ENCODE measurements at regions of chr18 and their contacts with region 1.

Region 1: DNA sequence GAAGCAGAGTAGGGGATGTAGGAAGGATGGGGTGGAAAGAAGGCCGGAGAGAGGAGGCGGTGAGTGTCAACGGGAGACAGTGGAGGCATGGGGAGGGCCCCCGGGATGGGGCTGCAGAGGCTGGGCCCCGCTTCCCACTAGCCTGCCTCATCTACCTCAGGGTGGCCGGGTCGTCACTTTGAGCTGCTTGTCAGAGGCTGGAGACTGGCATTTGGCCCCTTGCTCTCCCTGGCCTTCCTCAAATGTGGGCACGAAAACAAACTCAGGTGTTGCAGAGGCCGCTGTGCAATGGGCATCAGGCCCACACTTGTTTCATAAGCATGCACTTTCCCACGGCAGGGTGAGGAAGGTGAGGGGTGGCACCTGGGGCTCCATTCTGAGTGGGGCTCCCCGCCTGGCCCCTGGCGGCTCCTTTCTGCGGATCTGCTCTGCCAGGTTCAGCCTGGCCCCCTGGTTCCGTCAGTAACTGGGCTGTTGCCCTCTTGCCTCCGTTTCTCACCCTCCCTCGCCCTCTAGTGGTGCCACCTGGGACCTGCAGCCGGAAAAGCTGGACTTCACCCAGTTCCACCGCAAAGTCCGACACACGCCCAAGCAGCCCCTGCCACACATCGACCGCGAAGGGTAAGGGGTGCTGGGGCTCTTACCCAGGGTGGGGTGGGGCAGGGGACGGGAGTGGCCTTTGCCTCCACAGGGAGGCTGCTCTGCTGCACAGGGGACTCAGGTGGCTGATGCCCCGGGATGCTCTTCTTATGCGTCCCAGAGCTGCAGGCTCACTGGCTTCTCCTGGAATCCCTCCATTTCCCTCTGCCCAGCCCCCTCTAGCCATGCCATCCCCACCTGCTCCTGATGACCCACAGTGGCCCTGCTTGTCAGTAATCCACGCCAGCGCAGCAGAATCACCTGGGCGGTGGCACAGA is 125.4 kb downstream of the CTIF start:
- DNase-seq: peak in 9 of 10 donors; percentile 71 to 88 (median 78)
- H3K4me3 ChIP-seq: peak overlapping the region in 20 of 59 donors; percentile 2 to 41 (median 14)
- H3K27ac ChIP-seq: peak overlapping the region in 23 of 59 donors; percentile 4 to 74 (median 45)
- H3K27me3 ChIP-seq: no peaks in the 10 kb centered on the region
- CTCF ChIP-seq: peak; percentile 57 to 95 (median 87)

Region 2: GRCh38 chr18:48030616-48031480 is 633.3 kb before region 1 on chr18:
- intact Hi-C with region 1: loop called in 1 of 2 experiments (anchors 10 kb)
- DNase-seq: peak in 3 of 10 donors; percentile 27 to 59 (median 44)
- H3K4me3 ChIP-seq: no peak overlapping the region
- H3K27ac ChIP-seq: peak overlapping the region in 1 of 59 donors; percentile 38
- H3K27me3 ChIP-seq: no peaks in the 10 kb centered on the region
- CTCF ChIP-seq: peak; percentile 40 to 82 (median 68)

Region 3: GRCh38 chr18:48475635-48476549 is 188.3 kb before region 1 on chr18:
- intact Hi-C with region 1: loop called (anchors 1 to 2 kb)
- DNase-seq: peak in 7 of 10 donors; percentile 18 to 66 (median 55)
- H3K4me3 ChIP-seq: no peak overlapping the region
- H3K27ac ChIP-seq: no peak overlapping the region
- H3K27me3 ChIP-seq: peaks cover 0 to 3% (median 0%) of the 10 kb centered on the region in 45 donors
- CTCF ChIP-seq: peak; percentile 44 to 99 (median 90)

Region 4: DNA sequence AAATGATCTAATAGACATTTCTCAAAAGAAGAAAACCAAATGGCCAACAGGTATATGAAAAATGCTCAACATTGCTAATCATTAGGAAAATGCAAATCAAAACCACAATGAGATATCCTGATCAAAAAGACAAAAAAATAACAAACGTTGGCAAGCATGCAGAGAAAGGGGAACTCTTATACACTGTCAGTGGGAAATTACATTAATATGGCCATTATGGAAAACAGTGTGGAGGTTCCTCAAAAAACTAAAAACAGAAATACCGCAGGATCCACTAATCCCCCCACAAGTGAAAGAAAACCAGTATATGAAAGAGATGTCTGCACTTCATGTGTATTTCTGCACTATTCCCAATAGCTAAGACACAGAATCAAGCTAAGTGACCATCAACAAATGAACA is 183.1 kb before region 1 on chr18:
- intact Hi-C with region 1: loop called (anchors 1 to 2 kb)
- DNase-seq: no peak
- H3K4me3 ChIP-seq: no peak overlapping the region
- H3K27ac ChIP-seq: no peak overlapping the region
- H3K27me3 ChIP-seq: peaks cover 0 to 3% (median 0%) of the 10 kb centered on the region in 45 donors
- CTCF ChIP-seq: no peak

Region 5: GRCh38 chr18:48545757-48546321 is 118.3 kb before region 1 on chr18:
- intact Hi-C with region 1: loop called in 1 of 2 experiments (anchors 2 kb)
- DNase-seq: peak; percentile 53 to 92 (median 89)
- H3K4me3 ChIP-seq: peak overlapping the region in 27 of 59 donors; percentile 1 to 40 (median 21)
- H3K27ac ChIP-seq: peak overlapping the region in 52 of 59 donors; percentile 9 to 75 (median 54)
- H3K27me3 ChIP-seq: no peaks in the 10 kb centered on the region
- CTCF ChIP-seq: peak in 25 of 56 donors; percentile 8 to 54 (median 26)

Region 6: DNA sequence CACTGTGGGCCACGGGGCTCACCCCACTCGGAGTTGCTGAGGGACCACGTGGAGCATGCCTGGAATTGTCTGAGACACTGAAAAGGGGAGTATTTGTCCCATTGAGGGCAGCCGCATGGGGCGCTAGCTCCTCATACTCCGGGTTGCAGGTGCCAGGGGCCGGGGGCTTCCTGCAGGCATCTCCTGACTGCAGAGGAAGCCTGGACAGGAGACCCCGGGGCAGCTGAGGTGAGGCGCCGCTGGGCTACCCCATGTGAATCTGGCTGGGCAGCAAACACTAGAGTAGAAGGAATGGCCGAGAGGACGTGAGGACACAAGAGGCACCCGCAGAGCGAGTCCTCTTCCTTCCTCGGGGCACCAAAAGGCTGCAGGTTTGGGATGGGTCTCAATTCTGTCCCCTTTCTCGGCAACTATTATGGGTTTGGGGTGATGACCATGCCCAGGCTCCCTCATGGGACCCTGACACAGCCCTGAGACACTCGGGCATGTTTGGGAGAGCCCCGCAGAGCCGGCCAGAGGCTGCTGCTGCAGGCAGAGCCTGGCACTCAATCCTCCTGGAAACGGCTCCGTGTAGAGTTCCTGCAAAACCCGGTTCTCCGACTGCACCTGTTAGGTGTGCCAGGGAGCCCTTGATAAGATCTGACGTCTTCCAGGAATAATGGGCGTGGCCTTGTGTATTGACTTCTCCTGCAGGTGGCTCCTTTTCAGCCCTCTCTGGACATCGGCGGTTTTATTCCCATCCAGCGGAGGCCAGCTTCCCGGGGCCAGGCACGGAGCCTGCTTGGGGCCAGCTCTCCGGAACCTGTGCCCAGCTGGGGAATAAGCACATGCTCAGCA is 48.4 kb before region 1 on chr18:
- intact Hi-C with region 1: loop called in 1 of 2 experiments (anchors 5 kb)
- DNase-seq: no peak
- H3K4me3 ChIP-seq: no peak overlapping the region
- H3K27ac ChIP-seq: peak overlapping the region in 8 of 59 donors; percentile 6 to 88 (median 18)
- H3K27me3 ChIP-seq: no peaks in the 10 kb centered on the region
- CTCF ChIP-seq: no peak

Region 7: DNA sequence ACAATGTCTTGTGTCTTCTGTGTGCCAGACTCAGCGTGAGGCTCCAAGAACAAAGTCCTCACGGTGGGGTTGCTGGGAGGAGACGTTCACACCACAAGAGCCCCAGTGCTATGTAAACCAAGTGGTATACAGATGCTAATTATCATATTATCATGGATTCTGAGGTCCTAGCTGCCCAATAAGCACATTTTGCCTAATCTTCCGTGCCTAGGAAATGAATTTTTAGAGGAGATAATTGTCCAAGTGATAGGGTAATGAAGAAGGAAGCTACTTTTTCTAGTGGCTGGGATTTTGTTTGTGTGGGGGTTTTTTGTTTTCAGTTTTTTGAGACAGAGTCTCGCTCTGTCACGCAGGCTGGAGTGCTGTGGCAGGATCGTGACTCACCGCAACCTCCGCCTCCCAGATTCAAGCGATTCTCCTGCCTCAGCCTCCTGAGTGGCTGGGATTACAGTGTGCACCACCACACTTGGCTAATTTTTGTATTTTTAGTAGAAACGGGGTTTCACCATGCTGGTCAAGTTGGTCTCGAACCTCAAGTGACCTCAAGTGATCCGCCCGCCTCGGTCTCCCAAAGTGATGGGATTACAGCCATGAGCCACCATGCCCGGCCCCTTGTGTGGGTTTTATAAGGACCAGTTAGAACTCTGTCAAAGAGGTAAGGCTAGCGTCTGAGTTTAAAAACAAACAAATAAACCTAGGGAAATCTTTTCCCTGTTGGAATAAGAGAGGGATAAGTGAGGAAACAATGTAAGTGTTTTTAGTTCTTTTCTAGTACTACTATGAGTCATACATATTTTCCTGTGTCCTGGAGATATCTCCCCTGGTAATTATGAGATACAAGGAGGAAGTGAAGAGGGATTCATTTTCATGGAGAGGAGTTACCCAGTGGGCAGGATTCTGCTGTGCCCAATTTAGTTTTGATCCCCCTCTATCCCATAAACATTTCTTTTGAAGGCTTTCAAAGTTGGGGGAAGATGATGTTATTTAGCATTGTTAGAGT is 296.0 kb after region 1 on chr18:
- intact Hi-C with region 1: no loop called
- DNase-seq: no peak
- H3K4me3 ChIP-seq: no peak overlapping the region
- H3K27ac ChIP-seq: no peak overlapping the region
- H3K27me3 ChIP-seq: no peaks in the 10 kb centered on the region
- CTCF ChIP-seq: no peak